Calu3 (cell line): ENCODE measurements at regions of chr20 and their contacts with region 1.

Region 1: DNA sequence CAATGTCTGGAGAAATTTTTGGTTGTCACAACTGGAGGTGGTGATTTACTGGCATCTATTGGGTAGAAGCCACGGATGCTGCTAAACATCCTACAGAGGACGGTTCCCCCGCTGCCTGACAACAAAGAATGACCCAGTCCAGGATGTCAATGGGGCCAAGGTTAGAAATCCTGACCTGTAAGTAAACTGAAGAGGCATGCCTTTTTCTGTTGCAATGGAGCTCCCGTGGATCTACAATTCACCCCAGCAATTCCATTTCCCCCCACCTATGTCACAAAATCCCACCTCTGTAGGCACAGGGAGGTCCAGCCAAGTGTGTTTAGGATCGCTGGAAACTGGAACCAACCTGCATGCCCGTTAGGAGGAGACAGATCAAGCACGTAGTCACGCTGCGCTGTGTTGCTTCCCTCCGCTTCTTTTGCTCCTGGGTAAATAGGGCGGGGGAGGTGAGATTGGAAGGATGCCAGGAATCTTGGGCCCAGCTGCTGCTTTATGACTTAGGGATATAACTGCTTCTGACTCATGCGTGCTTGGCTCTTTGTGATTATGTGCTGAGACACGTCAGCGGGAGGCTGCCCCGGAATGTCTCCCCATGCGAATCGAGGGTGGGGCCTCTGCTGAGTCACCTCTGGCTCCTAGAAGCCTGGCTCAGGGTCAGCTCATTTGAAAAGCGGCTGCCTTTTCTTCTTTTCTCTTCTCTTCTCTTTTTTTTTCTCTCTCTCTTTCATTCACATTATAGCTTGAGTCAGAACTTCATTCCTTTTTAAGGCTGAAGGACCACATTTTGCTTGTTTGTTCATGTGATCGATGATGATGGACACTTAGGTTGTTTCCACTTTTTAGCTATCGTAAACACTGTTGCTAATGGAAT is 12.4 kb upstream of the PEDS1 start:
- DNase-seq: peak; percentile 99
- H3K4me3 Mint-ChIP-seq: peak overlapping the region; percentile 63
- H3K27ac Mint-ChIP-seq: peak overlapping the region; percentile 94
- H3K4me1 Mint-ChIP-seq: peaks cover 44% of the 10 kb centered on the region
- H3K27me3 Mint-ChIP-seq: no peaks in the 10 kb centered on the region
- CTCF ChIP-seq: no peak

Region 2: DNA sequence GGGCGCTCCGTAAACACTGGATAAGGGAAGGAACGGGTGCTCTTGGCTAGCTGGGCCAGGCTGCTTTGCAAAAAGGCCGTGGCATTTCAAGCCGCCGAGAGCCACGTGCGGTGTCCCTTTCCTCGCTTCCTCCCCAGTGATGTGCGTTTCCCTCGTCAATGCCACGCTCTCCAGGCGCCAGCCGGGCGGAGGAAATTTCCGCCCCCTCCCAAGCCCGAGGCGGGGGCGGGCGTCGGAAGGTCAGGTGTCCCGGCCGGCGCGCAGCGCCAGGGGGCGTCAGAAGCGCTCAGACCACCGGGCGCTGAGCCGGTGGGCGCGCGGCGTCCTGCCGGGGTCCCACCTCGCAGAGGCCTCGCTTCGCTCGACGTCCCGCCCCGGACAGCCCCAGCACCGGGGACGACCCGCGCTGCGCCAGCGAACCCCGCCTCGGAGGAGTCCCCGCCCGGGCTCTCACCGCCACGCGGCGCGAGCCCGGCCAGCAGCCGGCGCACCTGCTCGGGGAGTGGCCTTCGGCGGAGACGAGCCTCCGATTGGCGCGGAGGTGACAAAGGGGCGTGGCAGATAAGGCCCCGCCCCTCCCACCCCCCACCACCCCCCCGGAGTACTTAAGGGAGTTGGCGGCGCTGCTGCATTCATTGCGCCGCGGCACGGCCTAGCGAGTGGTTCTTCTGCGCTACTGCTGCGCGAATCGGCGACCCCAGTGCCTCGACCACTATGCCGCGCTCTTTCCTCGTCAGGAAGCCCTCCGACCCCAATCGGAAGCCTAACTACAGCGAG is 183.4 kb before region 1 on chr20 and contains the start of gene SNAI1:
- CTCF ChIA-PET with region 1: interaction called, 10 read pairs
- intact Hi-C with region 1: no loop called
- DNase-seq: peak; percentile 89
- H3K4me3 Mint-ChIP-seq: peak within 1 kb of the TSS; percentile 63
- H3K27ac Mint-ChIP-seq: peak within 1 kb of the TSS; percentile 45
- H3K4me1 Mint-ChIP-seq: peaks cover 33% of the 10 kb centered on the region
- H3K27me3 Mint-ChIP-seq: peaks cover 29% of the 10 kb centered on the region
- CTCF ChIP-seq: peak; percentile 80
- total RNA-seq, gene SNAI1: 0.81 and 0.90 TPM in 2 replicates

Region 3: DNA sequence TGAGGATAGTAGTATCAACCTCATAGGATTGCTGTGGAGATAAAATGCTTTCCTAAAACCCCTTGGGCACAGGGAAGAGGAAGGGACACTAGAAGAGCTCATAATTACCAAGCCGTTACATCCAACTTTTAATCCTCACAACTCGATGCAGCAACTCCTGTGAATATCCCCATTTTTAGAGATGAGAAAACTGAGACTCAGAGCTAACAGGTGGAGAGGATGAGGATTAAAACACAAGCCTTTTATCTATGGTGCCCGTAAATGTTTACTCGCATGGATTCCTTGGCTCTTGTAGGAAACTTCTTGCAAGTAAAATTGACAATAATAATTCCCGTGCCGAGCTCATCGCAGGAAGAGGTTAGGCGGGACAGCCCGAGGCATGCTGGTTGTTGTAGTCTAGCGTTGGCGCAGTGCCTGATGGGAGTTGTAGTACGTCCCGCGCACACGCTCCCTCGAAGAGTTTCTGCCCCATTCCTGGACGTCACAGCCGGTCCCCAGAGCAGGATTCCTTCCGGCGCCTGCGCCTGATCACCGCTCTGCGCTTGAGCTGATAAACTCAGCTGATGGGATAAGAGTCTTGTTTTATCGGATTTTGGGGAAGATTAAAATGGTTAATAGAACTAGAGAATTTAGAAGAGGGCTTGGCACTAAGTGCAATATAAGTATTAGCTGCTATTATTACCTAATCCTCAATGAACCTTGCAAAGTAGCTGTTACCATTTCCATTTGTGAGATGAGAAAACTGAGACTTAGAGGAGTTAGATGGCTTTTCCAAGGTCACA is 50.1 kb before region 1 on chr20:
- CTCF ChIA-PET with region 1: interaction called, 75 read pairs
- intact Hi-C with region 1: no loop called
- DNase-seq: peak; percentile 97
- H3K4me3 Mint-ChIP-seq: peak overlapping the region; percentile 73
- H3K27ac Mint-ChIP-seq: peak overlapping the region; percentile 69
- H3K4me1 Mint-ChIP-seq: peaks cover 53% of the 10 kb centered on the region
- H3K27me3 Mint-ChIP-seq: no peaks in the 10 kb centered on the region
- CTCF ChIP-seq: no peak

Region 4: GRCh38 chr20:50138479-50139393 is 27.2 kb before region 1 on chr20:
- CTCF ChIA-PET with region 1: interaction called, 11 read pairs
- intact Hi-C with region 1: no loop called
- DNase-seq: peak; percentile 96
- H3K4me3 Mint-ChIP-seq: peak overlapping the region; percentile 36
- H3K27ac Mint-ChIP-seq: peak overlapping the region; percentile 61
- H3K4me1 Mint-ChIP-seq: peaks cover 54% of the 10 kb centered on the region
- H3K27me3 Mint-ChIP-seq: no peaks in the 10 kb centered on the region
- CTCF ChIP-seq: peak; percentile 69

Region 5: DNA sequence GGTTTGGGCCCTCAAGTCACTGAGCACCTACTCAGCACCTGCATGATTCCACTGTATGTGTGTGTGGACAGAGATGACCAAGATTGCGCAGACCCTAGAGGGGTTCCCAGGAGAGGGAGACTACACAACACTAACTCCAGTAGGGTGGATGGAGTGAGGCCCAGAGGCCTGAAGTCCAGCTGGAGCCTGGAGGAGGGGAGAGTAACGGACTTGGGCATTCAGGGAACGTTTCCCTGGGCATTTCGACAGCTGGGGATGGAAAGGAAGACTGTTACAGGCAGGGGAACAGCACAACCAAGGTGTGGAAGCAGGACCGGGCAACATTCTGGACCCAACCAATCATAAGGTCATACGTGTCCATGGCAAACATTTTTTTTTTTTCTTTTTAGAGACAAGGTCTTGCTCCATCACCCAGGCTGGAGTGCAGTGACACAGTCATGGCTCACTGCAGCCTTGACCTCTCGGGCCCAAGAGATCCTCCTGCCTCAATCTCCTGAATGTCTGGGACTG is 13.6 kb after region 1 on chr20:
- CTCF ChIA-PET with region 1: interaction called, 19 read pairs
- intact Hi-C with region 1: no loop called
- DNase-seq: no peak
- H3K4me3 Mint-ChIP-seq: no peak overlapping the region
- H3K27ac Mint-ChIP-seq: peak overlapping the region; percentile 22
- H3K4me1 Mint-ChIP-seq: peaks cover 9% of the 10 kb centered on the region
- H3K27me3 Mint-ChIP-seq: no peaks in the 10 kb centered on the region
- CTCF ChIP-seq: peak; percentile 62